ENCODE measurements at regions of chr7 and their contacts with region 1.

Region 1: GRCh38 chr7:85186521-85187241 is at the start of gene SEMA3D:
- DNase-seq: peak; percentile 83

Region 2: DNA sequence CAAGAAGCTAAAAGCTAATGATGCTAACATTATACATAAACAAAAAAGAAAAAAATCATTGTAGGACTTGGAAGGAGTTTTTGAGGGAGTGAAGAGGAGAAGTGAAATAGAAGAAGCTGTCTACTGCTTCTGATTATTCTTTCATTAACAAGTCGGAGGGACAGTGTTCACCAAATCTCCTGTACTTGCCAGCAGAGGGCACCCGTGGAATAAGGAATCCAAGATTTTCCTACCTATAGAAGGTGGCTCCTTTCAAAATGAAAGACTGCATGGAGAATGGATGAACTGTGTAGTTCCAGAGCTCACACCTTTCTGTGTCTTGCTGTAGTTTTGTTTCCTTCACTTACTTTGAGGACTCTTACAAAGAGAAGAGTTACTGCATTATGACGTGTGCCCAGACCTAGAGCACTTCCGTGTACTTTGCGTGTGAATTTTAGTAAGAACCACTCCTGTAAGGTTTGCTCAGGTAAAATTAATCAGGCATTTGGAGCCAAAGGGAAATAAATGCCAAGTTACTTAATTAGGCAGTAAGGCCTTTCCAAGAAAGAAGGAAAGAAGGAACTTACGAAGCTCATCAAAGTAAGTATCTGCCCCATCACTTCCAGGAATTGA is 145.0 kb before region 1 on chr7:
- CTCF ChIA-PET with region 1: interaction called, 13 read pairs
- POLR2A ChIA-PET with region 1: interaction called, 3 read pairs
- DNase-seq: peak; percentile 54

Region 3: DNA sequence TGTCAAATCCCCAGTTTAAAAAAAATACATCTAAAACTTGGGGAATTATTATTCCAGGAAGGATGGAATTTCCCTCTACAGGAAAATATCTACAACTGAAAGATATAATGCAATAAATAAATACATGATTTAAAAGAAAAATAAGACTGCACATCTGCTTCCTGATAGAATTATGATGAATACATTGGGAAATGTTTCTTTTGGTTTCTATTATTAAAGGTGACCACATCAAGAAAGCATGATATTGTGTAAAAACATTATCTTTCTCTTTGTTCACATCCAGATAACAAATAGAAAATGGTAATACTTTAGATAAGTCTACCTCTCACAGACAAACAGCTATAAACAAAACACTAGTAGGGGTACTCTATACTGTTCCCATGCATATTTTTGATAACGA is 19.0 kb before region 1 on chr7:
- CTCF ChIA-PET with region 1: no interaction called
- POLR2A ChIA-PET with region 1: no interaction called
- DNase-seq: no peak

Region 4: GRCh38 chr7:85392326-85392725 is 205.6 kb after region 1 on chr7:
- CTCF ChIA-PET with region 1: no interaction called
- POLR2A ChIA-PET with region 1: no interaction called
- DNase-seq: no peak

Region 5: DNA sequence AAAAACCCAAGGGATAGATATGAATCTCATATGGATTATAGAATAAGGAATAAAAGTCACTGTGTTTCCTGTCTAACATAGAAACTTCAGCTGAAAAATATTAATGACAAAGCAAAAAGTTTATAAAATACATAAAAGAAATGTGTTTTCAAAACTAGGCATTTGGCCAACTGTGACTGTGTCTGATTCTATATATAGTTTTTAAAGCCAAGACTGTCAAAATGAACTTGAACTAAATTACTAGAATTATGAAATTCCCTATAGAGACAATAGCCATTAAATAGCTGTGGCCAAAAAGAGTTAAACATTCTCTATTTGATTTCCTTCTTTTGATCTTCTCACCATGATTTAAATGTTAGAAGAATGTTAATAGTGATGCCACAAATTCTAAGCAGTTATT is 311.4 kb after region 1 on chr7:
- CTCF ChIA-PET with region 1: no interaction called
- POLR2A ChIA-PET with region 1: no interaction called
- DNase-seq: no peak